ENCODE measurements at regions of chr1 and their contacts with region 1.

Region 1: DNA sequence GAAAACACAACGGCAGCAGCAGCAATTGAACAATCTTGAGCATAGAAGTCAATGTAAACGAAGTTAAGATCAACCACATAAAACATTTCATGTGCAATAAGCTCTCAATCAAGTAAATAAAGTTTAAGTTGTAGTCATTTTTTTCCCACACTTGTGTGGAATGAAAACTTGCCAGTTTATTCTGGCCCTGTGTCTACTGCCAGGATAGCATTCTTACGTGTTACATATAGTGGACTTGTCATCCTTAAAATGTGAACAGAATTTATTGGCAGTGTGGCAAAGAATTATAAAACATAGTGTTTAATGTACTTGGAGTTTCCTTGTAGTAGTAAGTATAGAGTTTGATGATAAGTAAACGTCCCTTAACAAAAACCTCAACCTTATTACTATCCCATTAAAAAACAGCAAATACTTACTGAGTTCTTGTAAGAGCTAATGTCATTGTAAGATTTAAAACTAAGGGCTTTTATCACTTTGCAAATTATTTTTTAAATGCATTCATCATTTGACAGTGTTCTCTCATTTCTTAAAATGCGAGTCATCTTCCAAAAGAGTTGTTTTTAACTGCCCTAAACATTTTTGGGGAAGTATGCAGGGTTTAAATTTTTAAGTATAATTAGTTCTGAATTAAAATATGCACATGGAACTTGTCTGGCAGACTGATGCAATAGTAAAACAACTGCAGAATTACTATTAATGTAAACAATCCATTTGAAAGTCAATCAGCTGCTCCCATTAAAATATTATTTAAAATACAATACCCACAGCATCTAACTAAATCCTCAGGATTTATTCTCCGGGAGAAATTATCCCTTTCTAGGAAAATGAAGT is 7.9 kb downstream of the COX20 start:
- DNase-seq: no peak
- ATAC-seq: no peak
- H3K4me3 ChIP-seq: no peak overlapping the region
- H3K27ac ChIP-seq: no peak overlapping the region
- H3K4me1 ChIP-seq: no peaks in the 10 kb centered on the region
- H3K27me3 ChIP-seq: no peaks in the 10 kb centered on the region
- CTCF ChIP-seq: no peak
- EP300 ChIP-seq: no peak
- POLR2A ChIP-seq: no peak
- RAD21 ChIP-seq: no peak

Region 2: DNA sequence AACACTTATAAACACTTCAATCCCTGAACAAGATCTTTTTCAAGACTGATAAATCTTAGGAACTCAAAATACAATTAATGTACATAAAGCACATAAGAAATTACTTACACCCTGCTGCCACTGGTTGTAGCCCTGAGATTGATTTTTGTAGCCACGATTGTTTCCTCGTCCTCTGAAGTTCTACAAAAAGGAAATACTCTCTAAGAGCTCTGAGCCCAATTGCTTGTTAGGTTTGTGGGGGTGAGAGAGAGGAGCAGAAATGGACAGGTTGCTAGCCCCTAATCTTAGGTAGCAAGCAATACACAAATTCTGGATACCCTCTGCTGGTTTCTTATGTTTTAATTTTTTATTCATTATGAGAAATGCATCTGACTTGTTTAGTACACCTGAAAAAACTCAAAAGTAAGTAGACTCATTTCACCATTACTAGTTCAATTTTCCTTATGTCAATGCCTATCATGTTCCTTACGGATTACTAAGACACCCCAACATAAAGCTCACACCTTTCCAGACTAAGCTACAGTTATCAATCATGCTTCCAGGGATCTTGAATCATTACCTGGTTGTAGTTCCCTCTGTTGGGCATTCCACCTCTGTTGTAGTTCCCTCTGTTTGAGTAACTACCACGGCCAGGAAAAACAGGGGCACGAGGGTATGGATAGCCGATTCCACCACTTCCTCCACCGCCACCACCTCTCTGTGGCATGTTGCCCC is 11.7 kb after region 1 on chr1:
- CTCF ChIA-PET with region 1: interaction called, 98 read pairs
- POLR2A ChIA-PET with region 1: interaction called, 350 read pairs
- RAD21 ChIA-PET with region 1: interaction called, 7 read pairs
- SMC1A ChIA-PET with region 1: interaction called, 360 read pairs
- in situ Hi-C with region 1: no loop called
- intact Hi-C with region 1: no loop called
- DNase-seq: no peak
- ATAC-seq: peak; percentile 6
- H3K4me3 ChIP-seq: no peak overlapping the region
- H3K27ac ChIP-seq: no peak overlapping the region
- H3K4me1 ChIP-seq: no peaks in the 10 kb centered on the region
- H3K27me3 ChIP-seq: no peaks in the 10 kb centered on the region
- CTCF ChIP-seq: no peak
- EP300 ChIP-seq: no peak
- POLR2A ChIP-seq: no peak
- RAD21 ChIP-seq: no peak

Measured in GM12878 (cell line).